ENCODE measurements at regions of chr10 and their contacts with region 1.

Region 1: DNA sequence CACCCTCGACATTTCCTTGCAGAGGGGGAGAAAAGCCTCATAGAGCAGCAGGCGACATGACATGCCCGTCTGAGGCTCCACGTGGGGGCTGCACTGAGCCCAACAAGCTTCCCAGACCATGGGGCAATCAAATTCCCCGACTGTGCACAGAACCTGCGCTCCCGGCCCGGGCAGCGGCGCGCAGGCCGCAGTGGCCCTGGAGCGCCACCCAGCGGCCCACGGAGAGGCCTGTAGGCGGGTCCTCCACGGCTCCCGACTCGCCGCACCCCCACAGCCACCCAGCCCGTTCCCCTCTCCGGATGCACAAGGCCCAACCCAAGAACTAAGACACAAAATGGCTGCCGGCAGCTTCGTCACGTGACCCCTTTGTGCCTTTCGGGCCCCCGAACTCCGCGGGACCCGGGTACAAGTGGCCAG is 816 bp downstream of the EPC1 start:
- DNase-seq: peak; percentile 96
- H3K4me3 Mint-ChIP-seq: peak overlapping the region; percentile 94
- H3K27ac Mint-ChIP-seq: peak overlapping the region; percentile 98
- H3K4me1 Mint-ChIP-seq: peaks cover 69% of the 10 kb centered on the region
- H3K27me3 Mint-ChIP-seq: no peaks in the 10 kb centered on the region

Region 2: DNA sequence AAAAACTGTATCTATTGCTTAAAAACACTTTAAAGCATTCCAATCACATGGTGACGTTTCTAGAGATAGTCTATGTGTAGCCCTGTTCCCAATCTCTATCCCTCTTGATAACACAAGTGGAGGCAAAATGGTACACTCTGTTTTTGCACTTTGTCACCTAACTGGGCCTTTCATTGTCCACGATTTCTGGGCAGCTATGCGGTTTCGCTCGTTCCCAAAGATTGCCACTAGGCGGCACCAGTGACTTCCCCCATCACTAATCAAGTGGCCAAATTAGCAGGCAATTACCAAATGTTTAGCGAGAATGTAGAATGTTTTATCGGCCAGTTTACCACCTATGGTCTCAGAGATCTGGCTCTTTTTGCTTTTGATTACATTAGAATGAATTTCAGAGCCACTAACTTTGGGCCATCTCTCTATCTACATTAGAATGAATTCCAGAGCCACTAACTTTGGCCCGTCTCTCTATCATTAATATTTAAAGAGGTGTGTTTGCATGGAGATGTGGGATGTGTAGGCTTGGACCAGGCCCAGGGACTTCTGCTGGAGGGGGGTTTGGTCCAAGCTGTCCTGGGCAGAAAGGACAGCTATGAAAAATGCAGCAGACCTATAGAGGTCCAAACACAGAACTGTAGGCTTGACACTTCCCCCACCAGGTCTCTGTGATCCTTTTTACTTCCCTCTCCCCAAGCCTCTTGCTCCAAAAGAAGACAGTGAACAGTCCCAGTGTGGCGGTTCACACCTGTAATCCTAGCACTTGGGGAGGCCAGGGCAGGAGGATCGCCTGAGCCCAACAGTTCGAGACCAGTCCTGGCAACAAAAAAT is 89.3 kb before region 1 on chr10:
- CTCF ChIA-PET with region 1: interaction called, 29 read pairs
- POLR2A ChIA-PET with region 1: interaction called, 11 read pairs
- DNase-seq: peak; percentile 77
- H3K4me3 Mint-ChIP-seq: no peak overlapping the region
- H3K27ac Mint-ChIP-seq: no peak overlapping the region
- H3K4me1 Mint-ChIP-seq: peaks cover 27% of the 10 kb centered on the region
- H3K27me3 Mint-ChIP-seq: no peaks in the 10 kb centered on the region

Region 3: DNA sequence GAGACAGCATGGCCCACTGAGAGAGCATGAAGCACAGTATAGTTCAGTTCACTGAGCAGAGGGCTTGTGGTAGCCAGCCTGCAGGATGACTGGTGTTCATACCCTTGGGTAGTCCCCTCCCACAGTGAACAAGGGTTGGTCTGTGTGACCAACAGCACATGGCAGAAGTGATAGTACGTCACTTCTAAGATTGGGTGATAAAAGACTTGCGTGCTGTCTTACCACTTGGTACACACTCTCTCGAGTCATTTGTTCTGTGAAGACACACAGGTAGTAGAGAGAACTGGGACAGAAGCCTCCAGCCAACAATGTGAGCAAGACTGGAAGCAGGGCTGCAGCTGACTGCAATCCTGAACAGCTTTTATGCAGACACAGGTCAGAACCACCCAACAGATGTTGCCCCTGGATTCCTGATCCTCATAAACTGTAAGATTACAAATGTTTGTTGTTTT is 13.8 kb before region 1 on chr10:
- CTCF ChIA-PET with region 1: interaction called, 11 read pairs
- POLR2A ChIA-PET with region 1: interaction called, 9 read pairs
- DNase-seq: peak; percentile 83
- H3K4me3 Mint-ChIP-seq: peak overlapping the region; percentile 59
- H3K27ac Mint-ChIP-seq: peak overlapping the region; percentile 77
- H3K4me1 Mint-ChIP-seq: peaks cover 83% of the 10 kb centered on the region
- H3K27me3 Mint-ChIP-seq: no peaks in the 10 kb centered on the region

Region 4: DNA sequence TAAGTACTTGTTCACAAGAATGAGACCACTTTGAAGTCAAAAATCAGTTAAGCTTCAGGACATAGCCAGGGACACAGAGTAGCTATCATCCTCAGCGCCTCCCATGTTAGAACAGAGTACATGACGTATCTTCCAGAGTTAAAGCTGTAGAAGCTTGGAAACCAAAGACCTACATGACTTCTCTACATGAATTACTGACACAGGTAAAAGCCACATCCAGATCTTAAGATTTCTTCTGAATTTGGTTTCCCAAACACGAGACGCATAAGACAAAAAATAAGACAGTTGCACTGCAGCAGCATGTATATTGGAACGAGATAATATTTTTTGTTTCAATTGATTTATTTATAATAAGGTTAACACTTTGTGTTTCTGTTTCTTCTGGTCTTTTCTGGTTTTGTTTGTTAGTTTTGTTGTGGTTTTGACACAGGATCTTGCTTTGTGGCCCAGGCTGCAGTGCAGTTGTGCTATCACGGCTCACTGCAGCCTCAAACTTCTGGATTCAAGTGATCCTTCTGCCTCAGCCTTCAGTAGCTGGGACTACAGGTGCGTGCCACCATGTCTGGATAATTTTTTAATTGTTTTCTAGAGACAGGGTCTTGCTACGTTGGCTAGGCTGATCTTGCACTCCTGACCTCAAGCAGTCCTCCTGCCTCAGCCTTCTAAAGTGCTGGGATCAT is 11.1 kb after region 1 on chr10:
- CTCF ChIA-PET with region 1: interaction called, 8 read pairs
- POLR2A ChIA-PET with region 1: interaction called, 26 read pairs
- DNase-seq: peak; percentile 61
- H3K4me3 Mint-ChIP-seq: peak overlapping the region; percentile 62
- H3K27ac Mint-ChIP-seq: peak overlapping the region; percentile 92
- H3K4me1 Mint-ChIP-seq: peaks cover 79% of the 10 kb centered on the region
- H3K27me3 Mint-ChIP-seq: no peaks in the 10 kb centered on the region

Region 5: GRCh38 chr10:32362571-32362970 is 16.4 kb after region 1 on chr10:
- CTCF ChIA-PET with region 1: interaction called, 10 read pairs
- POLR2A ChIA-PET with region 1: interaction called, 26 read pairs
- DNase-seq: no peak
- H3K4me3 Mint-ChIP-seq: no peak overlapping the region
- H3K27ac Mint-ChIP-seq: no peak overlapping the region
- H3K4me1 Mint-ChIP-seq: peaks cover 66% of the 10 kb centered on the region
- H3K27me3 Mint-ChIP-seq: no peaks in the 10 kb centered on the region

Region 6: DNA sequence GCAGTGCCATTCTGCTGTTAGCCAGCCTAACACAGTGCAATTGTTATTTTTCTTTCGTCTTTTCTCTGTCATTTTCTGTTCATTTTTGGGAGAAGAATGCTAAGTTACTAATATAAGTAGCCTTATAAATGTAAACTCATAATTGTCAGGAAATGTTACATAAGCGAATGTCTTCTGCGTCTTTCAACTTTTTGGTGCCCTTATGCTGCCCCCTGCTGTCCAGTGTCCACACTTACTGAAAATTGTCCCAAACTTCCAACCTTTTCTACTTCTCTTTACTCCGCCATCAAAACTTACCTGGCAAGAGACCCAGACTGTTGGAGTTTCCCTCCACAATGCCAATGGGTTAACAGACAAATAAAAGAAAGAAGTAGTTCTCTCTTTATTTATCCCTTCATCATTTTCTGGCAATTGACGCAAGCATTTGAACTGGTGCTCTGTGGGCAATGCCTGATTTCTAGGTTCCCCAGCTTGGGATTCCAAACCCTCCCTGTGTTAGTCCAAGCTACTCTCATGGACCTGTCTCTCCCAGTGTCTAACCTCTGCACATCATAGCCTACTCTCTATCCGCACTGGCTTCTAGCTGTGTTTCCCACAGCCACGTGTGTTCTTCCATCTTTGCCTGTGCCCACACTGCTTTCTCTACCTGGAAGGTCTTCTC is 21.8 kb after region 1 on chr10:
- CTCF ChIA-PET with region 1: interaction called, 10 read pairs
- POLR2A ChIA-PET with region 1: interaction called, 18 read pairs
- DNase-seq: peak; percentile 77
- H3K4me3 Mint-ChIP-seq: no peak overlapping the region
- H3K27ac Mint-ChIP-seq: peak overlapping the region; percentile 4
- H3K4me1 Mint-ChIP-seq: peaks cover 40% of the 10 kb centered on the region
- H3K27me3 Mint-ChIP-seq: no peaks in the 10 kb centered on the region

Region 7: GRCh38 chr10:32378363-32379317 is 32.5 kb after region 1 on chr10:
- CTCF ChIA-PET with region 1: interaction called, 8 read pairs
- POLR2A ChIA-PET with region 1: interaction called, 26 read pairs
- DNase-seq: peak; percentile 95
- H3K4me3 Mint-ChIP-seq: no peak overlapping the region
- H3K27ac Mint-ChIP-seq: no peak overlapping the region
- H3K4me1 Mint-ChIP-seq: peaks cover 25% of the 10 kb centered on the region
- H3K27me3 Mint-ChIP-seq: no peaks in the 10 kb centered on the region

Region 8: GRCh38 chr10:32393911-32394310 is 47.8 kb after region 1 on chr10:
- CTCF ChIA-PET with region 1: no interaction called
- POLR2A ChIA-PET with region 1: no interaction called
- DNase-seq: no peak
- H3K4me3 Mint-ChIP-seq: no peak overlapping the region
- H3K27ac Mint-ChIP-seq: no peak overlapping the region
- H3K4me1 Mint-ChIP-seq: no peaks in the 10 kb centered on the region
- H3K27me3 Mint-ChIP-seq: no peaks in the 10 kb centered on the region

Measured in activated CD4-positive, alpha-beta memory T cell treated with anti-CD3 and anti-CD28 coated beads, Interleukin-2, amount 10 ng/mL, durations not matched to agents 7 days and 5 days (primary cell).